PC-9 (cell line): ENCODE measurements at regions of chr14 and their contacts with region 1.

Region 1: GRCh38 chr14:64540208-64541157 is at the start of gene HSPA2:
- DNase-seq: peak; percentile 97 to 100
- H3K4me3 ChIP-seq: peak within 1 kb of the TSS; percentile 74
- H3K27ac ChIP-seq: peak within 1 kb of the TSS; percentile 84
- H3K4me1 ChIP-seq: peaks cover 37% of the 10 kb centered on the region
- H3K27me3 ChIP-seq: no peaks in the 10 kb centered on the region
- CTCF ChIP-seq: peak; percentile 77
- total RNA-seq, gene HSPA2: 11.0 and 14.3 TPM in 2 replicates

Region 2: GRCh38 chr14:64410084-64410774 is 130.3 kb before region 1 on chr14:
- CTCF ChIA-PET with region 1: interaction called, 10 read pairs
- POLR2A ChIA-PET with region 1: no interaction called
- intact Hi-C with region 1: no loop called
- DNase-seq: peak; percentile 67 to 85
- H3K4me3 ChIP-seq: no peak overlapping the region
- H3K27ac ChIP-seq: peak overlapping the region; percentile 46
- H3K4me1 ChIP-seq: peaks cover 22% of the 10 kb centered on the region
- H3K27me3 ChIP-seq: no peaks in the 10 kb centered on the region
- CTCF ChIP-seq: no peak

Region 3: DNA sequence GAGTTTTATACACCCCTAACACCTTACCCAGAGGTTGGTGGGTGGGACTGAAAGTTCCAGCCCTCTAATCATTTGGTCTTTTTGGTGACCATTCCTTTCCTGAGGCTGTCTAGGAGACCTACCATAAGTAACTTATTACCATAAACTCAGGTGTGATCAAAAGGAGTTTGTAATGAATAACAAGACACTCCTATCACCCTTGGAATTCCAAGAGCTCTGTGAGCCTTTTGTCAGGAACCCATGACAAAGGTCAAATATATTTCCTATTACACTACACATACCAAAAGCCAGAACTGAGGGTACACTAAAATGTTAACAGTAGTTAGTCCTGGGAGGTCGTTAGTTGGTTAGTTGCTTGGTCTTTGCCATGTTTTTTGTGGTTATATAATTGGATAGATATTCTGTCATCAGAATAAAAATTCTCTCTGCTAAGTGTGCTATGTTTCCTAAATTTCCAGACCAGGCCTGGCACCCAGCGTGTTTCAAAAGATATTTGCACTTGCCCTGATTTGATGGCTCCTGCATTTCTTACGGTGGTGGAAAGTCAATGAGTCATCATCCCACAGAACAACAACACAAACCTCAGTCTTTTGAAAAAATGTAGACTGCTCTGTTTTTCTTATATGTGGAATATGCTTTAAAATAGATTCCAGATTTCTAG is 102.2 kb before region 1 on chr14:
- CTCF ChIA-PET with region 1: no interaction called
- POLR2A ChIA-PET with region 1: no interaction called
- intact Hi-C with region 1: no loop called
- DNase-seq: peak; percentile 65 to 94
- H3K4me3 ChIP-seq: peak overlapping the region; percentile 30; the same call in 1 of the 2 replicates
- H3K27ac ChIP-seq: peak overlapping the region; percentile 82
- H3K4me1 ChIP-seq: peaks cover 34% of the 10 kb centered on the region
- H3K27me3 ChIP-seq: no peaks in the 10 kb centered on the region
- CTCF ChIP-seq: no peak

Region 4: DNA sequence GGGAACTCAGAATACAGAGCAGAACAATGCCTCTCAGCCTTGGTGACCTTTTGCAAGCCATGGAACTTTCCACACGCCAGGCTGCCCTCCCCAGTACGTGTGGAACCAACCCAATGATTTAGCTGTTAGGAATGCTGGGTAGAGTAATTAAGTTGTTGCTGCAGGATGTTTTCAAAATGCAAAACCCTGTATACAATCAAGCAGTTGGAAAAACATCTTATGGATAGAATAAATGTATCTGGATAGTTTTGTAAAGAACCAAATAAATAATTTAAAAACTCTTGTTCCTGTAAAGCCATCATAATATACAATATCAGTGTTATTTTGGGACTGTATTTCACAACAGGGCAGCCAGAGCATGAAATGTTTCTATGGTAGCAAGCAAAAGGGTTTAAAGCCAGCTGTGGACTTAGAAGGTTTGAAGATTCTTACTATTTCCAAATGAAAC is 28.7 kb after region 1 on chr14:
- CTCF ChIA-PET with region 1: interaction called, 3 read pairs
- POLR2A ChIA-PET with region 1: no interaction called
- intact Hi-C with region 1: loop called (anchors 1 kb)
- DNase-seq: peak; percentile 77 to 94
- H3K4me3 ChIP-seq: no peak overlapping the region
- H3K27ac ChIP-seq: peak overlapping the region; percentile 62
- H3K4me1 ChIP-seq: peaks cover 28% of the 10 kb centered on the region
- H3K27me3 ChIP-seq: no peaks in the 10 kb centered on the region
- CTCF ChIP-seq: no peak

Region 5: GRCh38 chr14:64654246-64654900 is 113.9 kb after region 1 on chr14:
- CTCF ChIA-PET with region 1: interaction called, 13 read pairs
- POLR2A ChIA-PET with region 1: interaction called, 4 read pairs
- intact Hi-C with region 1: no loop called
- DNase-seq: peak in 1 of 2 experiments; percentile 87
- H3K4me3 ChIP-seq: no peak overlapping the region
- H3K27ac ChIP-seq: peak overlapping the region; percentile 41
- H3K4me1 ChIP-seq: peaks cover 19% of the 10 kb centered on the region
- H3K27me3 ChIP-seq: no peaks in the 10 kb centered on the region
- CTCF ChIP-seq: no peak

Region 6: DNA sequence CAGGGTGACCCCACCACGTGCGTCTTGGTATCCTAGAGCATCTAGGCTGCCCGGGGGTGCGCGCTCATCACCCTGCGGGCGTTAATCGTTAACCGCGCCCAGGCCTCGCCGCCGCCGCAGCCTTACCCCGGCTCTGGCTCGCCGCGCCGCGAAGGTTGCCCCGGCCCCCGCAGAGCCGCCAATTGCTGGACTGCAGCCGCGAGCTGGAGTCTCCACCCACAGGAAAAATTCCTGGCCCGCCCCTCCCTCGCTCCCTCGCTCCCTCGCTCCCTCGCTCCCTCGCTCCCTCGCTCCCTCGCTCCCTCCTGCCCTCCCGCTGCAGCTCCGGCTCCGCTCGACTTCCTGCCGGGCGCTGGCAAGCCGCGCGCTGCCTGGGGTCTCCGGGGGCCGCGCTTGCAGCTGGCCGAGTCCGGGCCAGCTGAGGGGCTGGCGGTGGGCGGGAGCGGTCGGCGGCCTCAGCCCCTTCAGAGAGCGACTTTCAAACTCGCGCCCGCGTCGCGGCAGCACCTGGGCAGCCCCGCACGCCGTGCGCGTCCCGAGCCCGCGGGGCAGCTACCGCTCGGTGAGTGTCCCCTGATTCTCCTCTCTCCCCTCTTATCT is 163.8 kb after region 1 on chr14 and contains the start of gene PLEKHG3:
- CTCF ChIA-PET with region 1: interaction called, 4 read pairs
- POLR2A ChIA-PET with region 1: interaction called, 4 read pairs
- intact Hi-C with region 1: loop called (anchors 1 kb)
- DNase-seq: peak; percentile 70 to 88
- H3K4me3 ChIP-seq: peak within 1 kb of the TSS; percentile 97
- H3K27ac ChIP-seq: peak within 1 kb of the TSS; percentile 49
- H3K4me1 ChIP-seq: peaks cover 69% of the 10 kb centered on the region
- H3K27me3 ChIP-seq: no peaks in the 10 kb centered on the region
- CTCF ChIP-seq: no peak
- total RNA-seq, gene PLEKHG3: 59.3 and 61.7 TPM in 2 replicates

Region 7: DNA sequence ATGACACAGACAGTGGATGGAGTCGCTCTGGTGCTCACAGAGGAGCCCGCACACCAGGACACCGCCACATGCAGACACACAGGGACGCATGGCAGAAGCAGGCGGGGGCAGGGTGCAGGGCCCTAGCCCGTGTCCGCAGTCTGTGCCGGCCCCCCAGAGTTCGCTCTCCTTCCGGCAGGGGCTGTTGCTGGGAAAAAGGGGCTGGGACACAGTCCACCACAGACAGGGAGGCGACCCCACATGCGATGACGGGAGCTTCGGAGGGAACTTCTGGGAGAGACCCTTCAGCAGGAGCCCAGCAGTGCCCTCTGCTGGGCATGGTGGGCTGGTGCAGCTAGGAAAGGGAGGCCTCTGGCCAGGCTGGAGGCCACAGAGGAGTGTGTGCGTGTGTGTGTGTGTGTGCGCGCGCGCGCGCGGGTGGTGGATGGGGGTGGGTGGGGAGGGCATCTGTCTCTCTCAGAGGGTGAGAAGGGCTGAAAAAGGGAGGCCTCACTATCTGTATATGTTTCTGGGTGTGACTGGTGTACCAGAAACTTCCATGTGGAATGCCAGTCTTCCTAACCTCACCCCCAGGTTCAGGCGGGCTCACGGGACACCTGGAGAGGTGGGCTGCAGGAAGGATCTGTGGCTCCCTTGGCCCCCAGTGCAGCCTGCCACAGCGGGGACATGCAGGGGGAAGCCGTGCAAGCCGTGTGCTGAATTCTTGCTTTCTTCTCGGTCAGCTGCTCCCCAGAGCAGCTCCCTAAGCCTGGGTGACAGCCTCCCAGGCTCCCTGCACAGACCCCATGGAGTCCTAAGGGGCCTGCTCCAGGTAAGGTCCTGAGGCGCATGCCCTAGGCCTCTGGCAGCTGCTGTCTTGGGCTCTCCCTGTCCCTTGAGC is 224.4 kb after region 1 on chr14:
- CTCF ChIA-PET with region 1: interaction called, 3 read pairs
- POLR2A ChIA-PET with region 1: interaction called, 11 read pairs
- intact Hi-C with region 1: loop called (anchors 2 kb)
- DNase-seq: peak in 1 of 2 experiments; percentile 72
- H3K4me3 ChIP-seq: peak overlapping the region; percentile 27; the same call in 1 of the 2 replicates
- H3K27ac ChIP-seq: no peak overlapping the region
- H3K4me1 ChIP-seq: peaks cover 39% of the 10 kb centered on the region
- H3K27me3 ChIP-seq: no peaks in the 10 kb centered on the region
- CTCF ChIP-seq: peak; percentile 92

Region 8: GRCh38 chr14:64891839-64892375 is 351.4 kb after region 1 on chr14:
- CTCF ChIA-PET with region 1: no interaction called
- POLR2A ChIA-PET with region 1: interaction called, 6 read pairs
- intact Hi-C with region 1: loop called (anchors 10 kb)
- DNase-seq: peak; percentile 23 to 63
- H3K4me3 ChIP-seq: no peak overlapping the region
- H3K27ac ChIP-seq: no peak overlapping the region
- H3K4me1 ChIP-seq: no peaks in the 10 kb centered on the region
- H3K27me3 ChIP-seq: no peaks in the 10 kb centered on the region
- CTCF ChIP-seq: peak; percentile 89